ENCODE measurements at regions of chr15 and their contacts with region 1.

Region 1: GRCh38 chr15:38453971-38454695 is at the start of gene FAM98B:
- DNase-seq: peak; percentile 73
- ATAC-seq: peak; percentile 96
- H3K4me3 ChIP-seq: peak within 1 kb of the TSS; percentile 93 to 96 (median 96)
- H3K27ac ChIP-seq: peak within 1 kb of the TSS; percentile 98
- H3K4me1 ChIP-seq: peaks cover 19% of the 10 kb centered on the region
- H3K27me3 ChIP-seq: peaks cover 0 to 5% of the 10 kb centered on the region in 2 experiments; a peak in 1 of 5 replicates
- CTCF ChIP-seq: peak; percentile 25; the same call in 1 of the 2 replicates
- EP300 ChIP-seq: no peak; a peak in 1 of 4 replicates
- POLR2A ChIP-seq: peak; percentile 89 to 91
- RAD21 ChIP-seq: peak; percentile 38
- total RNA-seq, gene FAM98B: 4.7 and 8.1 TPM in 2 replicates

Region 2: GRCh38 chr15:38242055-38242454 is 212.1 kb before region 1 on chr15:
- CTCF ChIA-PET with region 1: no interaction called
- POLR2A ChIA-PET with region 1: no interaction called
- in situ Hi-C with region 1: no loop called
- intact Hi-C with region 1: loop called (anchors 10 kb)
- DNase-seq: no peak
- ATAC-seq: no peak
- H3K4me3 ChIP-seq: no peak overlapping the region
- H3K27ac ChIP-seq: no peak overlapping the region
- H3K4me1 ChIP-seq: no peaks in the 10 kb centered on the region
- H3K27me3 ChIP-seq: no peaks in the 10 kb centered on the region; a peak in 1 of 5 replicates
- CTCF ChIP-seq: no peak
- EP300 ChIP-seq: no peak
- POLR2A ChIP-seq: no peak
- RAD21 ChIP-seq: no peak

Measured in HepG2 (cell line).